B cell (primary cell): ENCODE measurements at regions of chr19 and their contacts with region 1.

Region 1: GRCh38 chr19:57435062-57435978 is at the start of gene ZNF749:
- DNase-seq: peak; percentile 97
- ATAC-seq: peak; percentile 100
- H3K4me3 ChIP-seq: peak within 1 kb of the TSS; percentile 61 to 81 (median 69)
- H3K4me3 Mint-ChIP-seq: peak within 1 kb of the TSS; percentile 99
- H3K27ac ChIP-seq: peak within 1 kb of the TSS; percentile 18 to 78
- H3K27ac Mint-ChIP-seq: peak within 1 kb of the TSS; percentile 94
- H3K4me1 ChIP-seq: peaks cover 17% of the 10 kb centered on the region in 2 donors
- H3K4me1 Mint-ChIP-seq: peaks cover 28% of the 10 kb centered on the region
- H3K27me3 ChIP-seq: no peaks in the 10 kb centered on the region
- H3K27me3 Mint-ChIP-seq: no peaks in the 10 kb centered on the region
- CTCF ChIP-seq: no peak
- total RNA-seq, gene ZNF749: 17.4 and 20.1 TPM in 2 replicates

Region 2: GRCh38 chr19:57362997-57363705 is 72.2 kb before region 1 on chr19 and contains the starts of genes TRAPPC2B and ZNF547:
- CTCF ChIA-PET with region 1: no interaction called
- POLR2A ChIA-PET with region 1: interaction called, 3 read pairs
- intact Hi-C with region 1: loop called (anchors 1 kb)
- DNase-seq: peak; percentile 100
- ATAC-seq: peak; percentile 94
- H3K4me3 ChIP-seq: peak within 1 kb of the TSS; percentile 56 to 80 (median 71)
- H3K4me3 Mint-ChIP-seq: peak within 1 kb of the TSS; percentile 95
- H3K27ac ChIP-seq: peak within 1 kb of the TSS; percentile 85 to 97
- H3K27ac Mint-ChIP-seq: peak within 1 kb of the TSS; percentile 97
- H3K4me1 ChIP-seq: peaks cover 10 to 15% of the 10 kb centered on the region in 2 donors
- H3K4me1 Mint-ChIP-seq: peaks cover 17% of the 10 kb centered on the region
- H3K27me3 ChIP-seq: no peaks in the 10 kb centered on the region
- H3K27me3 Mint-ChIP-seq: no peaks in the 10 kb centered on the region
- CTCF ChIP-seq: no peak
- total RNA-seq, gene TRAPPC2B: 9.6 and 12.4 TPM in 2 replicates
- total RNA-seq, gene ZNF547: 9.7 and 9.9 TPM in 2 replicates

Region 3: DNA sequence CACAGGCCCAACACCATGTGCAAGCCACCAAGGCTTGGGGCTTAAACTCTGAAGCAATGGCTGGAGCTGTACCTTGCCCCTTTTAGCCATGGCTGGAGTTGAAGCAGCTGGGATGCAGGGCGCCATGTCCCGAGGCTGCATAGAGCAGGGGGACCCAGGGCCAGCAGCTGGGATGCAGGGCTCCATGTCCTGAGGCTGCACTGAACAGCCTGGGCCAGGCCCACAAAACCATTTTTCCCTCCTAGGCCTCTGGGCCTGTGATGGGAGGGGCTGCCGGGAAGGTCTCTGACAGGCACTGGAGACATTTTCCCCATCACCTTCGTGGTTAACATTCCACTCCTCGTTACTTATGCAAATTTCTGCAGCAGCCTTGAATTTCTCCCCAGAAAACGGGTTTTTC is 61.1 kb before region 1 on chr19:
- CTCF ChIA-PET with region 1: no interaction called
- POLR2A ChIA-PET with region 1: no interaction called
- intact Hi-C with region 1: no loop called
- DNase-seq: no peak
- ATAC-seq: no peak
- H3K4me3 ChIP-seq: no peak overlapping the region
- H3K4me3 Mint-ChIP-seq: no peak overlapping the region
- H3K27ac ChIP-seq: no peak overlapping the region
- H3K27ac Mint-ChIP-seq: no peak overlapping the region
- H3K4me1 ChIP-seq: no peaks in the 10 kb centered on the region
- H3K4me1 Mint-ChIP-seq: no peaks in the 10 kb centered on the region
- H3K27me3 ChIP-seq: no peaks in the 10 kb centered on the region
- H3K27me3 Mint-ChIP-seq: no peaks in the 10 kb centered on the region
- CTCF ChIP-seq: no peak

Region 4: GRCh38 chr19:57477191-57478008 is 42.1 kb after region 1 on chr19 and contains the start of gene ZNF772:
- CTCF ChIA-PET with region 1: no interaction called
- POLR2A ChIA-PET with region 1: no interaction called
- intact Hi-C with region 1: loop called (anchors 1 kb)
- DNase-seq: peak; percentile 95
- ATAC-seq: peak; percentile 99
- H3K4me3 ChIP-seq: peak within 1 kb of the TSS; percentile 77 to 91 (median 85)
- H3K4me3 Mint-ChIP-seq: peak within 1 kb of the TSS; percentile 86
- H3K27ac ChIP-seq: peak within 1 kb of the TSS; percentile 65 to 81
- H3K27ac Mint-ChIP-seq: peak within 1 kb of the TSS; percentile 81
- H3K4me1 ChIP-seq: peaks cover 11 to 15% of the 10 kb centered on the region in 2 donors
- H3K4me1 Mint-ChIP-seq: peaks cover 27% of the 10 kb centered on the region
- H3K27me3 ChIP-seq: no peaks in the 10 kb centered on the region
- H3K27me3 Mint-ChIP-seq: peaks cover 10% of the 10 kb centered on the region
- CTCF ChIP-seq: peak; percentile 68
- total RNA-seq, gene ZNF772: 26.2 and 27.4 TPM in 2 replicates

Region 5: DNA sequence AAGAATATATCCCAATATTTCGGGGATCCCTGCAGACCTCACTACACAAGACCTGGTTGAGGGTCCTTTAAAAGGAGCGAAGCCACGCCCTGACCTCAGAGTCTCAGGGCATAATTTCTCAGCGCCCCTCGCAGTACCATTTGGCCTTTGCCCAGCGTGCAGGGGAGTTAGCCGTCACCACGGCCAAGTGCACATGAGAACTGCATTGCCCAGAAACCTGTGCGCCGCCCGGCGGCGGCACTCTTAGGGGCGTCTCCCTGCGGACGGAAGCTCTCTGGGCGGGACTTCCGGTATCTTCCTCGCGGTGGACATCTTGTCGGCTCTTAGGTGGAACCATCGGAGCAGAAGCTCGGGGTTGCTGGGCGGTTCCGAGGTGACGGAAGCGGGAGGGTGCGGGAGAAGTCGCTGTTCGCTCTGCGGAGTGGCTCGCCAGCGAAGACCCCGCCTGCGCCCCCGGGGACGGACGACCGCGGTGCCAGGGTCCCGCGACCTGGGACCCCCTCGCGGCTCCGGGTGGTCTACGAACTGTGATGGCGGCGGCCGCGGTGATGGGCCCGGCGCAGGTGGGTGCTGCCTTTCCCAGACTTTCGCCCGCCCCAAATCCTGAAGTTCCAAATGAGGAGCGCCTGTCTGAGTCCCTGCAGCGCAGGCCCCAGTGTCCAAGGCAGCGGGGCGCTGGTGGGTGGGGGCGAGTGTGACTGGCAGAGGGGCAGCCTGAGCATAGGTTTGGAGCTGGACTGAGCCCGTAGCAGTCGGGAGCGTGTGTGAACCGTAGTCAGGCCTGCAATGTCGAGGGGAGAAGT is 178.8 kb after region 1 on chr19 and contains the start of gene ZNF134:
- CTCF ChIA-PET with region 1: no interaction called
- POLR2A ChIA-PET with region 1: no interaction called
- intact Hi-C with region 1: loop called (anchors 1 kb)
- DNase-seq: peak; percentile 94
- ATAC-seq: peak; percentile 99
- H3K4me3 ChIP-seq: peak within 1 kb of the TSS; percentile 45 to 97 (median 92)
- H3K4me3 Mint-ChIP-seq: peak within 1 kb of the TSS; percentile 93
- H3K27ac ChIP-seq: peak within 1 kb of the TSS; percentile 42 to 81
- H3K27ac Mint-ChIP-seq: peak within 1 kb of the TSS; percentile 90
- H3K4me1 ChIP-seq: peaks cover 14 to 21% of the 10 kb centered on the region in 2 donors
- H3K4me1 Mint-ChIP-seq: peaks cover 40% of the 10 kb centered on the region
- H3K27me3 ChIP-seq: no peaks in the 10 kb centered on the region
- H3K27me3 Mint-ChIP-seq: no peaks in the 10 kb centered on the region
- CTCF ChIP-seq: peak; percentile 34
- total RNA-seq, gene ZNF134: 38.1 and 38.9 TPM in 2 replicates

Region 6: GRCh38 chr19:57819475-57820148 is 384.3 kb after region 1 on chr19:
- CTCF ChIA-PET with region 1: no interaction called
- POLR2A ChIA-PET with region 1: no interaction called
- intact Hi-C with region 1: loop called (anchors 10 kb)
- DNase-seq: peak; percentile 90
- ATAC-seq: peak; percentile 83
- H3K4me3 ChIP-seq: peak overlapping the region; percentile 78 to 92 (median 83)
- H3K4me3 Mint-ChIP-seq: peak overlapping the region; percentile 94
- H3K27ac ChIP-seq: peak overlapping the region; percentile 75 to 88
- H3K27ac Mint-ChIP-seq: peak overlapping the region; percentile 97
- H3K4me1 ChIP-seq: peaks cover 12 to 17% of the 10 kb centered on the region in 2 donors
- H3K4me1 Mint-ChIP-seq: peaks cover 58% of the 10 kb centered on the region
- H3K27me3 ChIP-seq: no peaks in the 10 kb centered on the region
- H3K27me3 Mint-ChIP-seq: no peaks in the 10 kb centered on the region
- CTCF ChIP-seq: no peak